Right lobe of liver (tissue), 6 donors: ENCODE measurements at regions of chr3 and their contacts with region 1.

Region 1: DNA sequence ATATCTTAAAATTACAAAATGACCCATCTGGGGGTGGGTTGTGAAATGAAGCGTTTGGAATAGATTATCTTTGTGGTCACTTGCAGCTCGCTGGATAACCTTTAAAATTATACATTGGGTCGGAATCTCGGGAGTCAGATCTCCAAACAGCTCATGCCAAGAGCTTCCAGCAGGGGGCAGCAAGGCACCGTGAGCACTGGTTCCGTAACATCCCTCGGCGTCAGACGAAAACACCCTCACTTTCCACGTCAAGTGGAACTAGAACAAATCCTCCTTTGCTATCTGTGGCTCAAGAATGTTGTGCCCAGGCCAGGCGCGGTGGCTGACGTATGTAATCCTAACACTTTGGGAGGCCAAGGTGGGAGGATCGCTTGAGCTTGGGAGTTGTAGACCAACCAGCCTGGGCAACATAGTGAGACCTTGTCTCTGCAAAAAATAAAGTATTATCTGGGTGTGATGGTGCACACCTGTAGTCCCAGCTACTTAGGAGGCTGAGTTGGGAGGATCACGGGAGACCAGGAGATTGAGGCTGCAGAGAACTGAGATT is 31.1 kb downstream of the UMPS start:
- DNase-seq: peak; percentile 80 to 86 (median 82)
- ATAC-seq: peak; percentile 92 to 94 (median 92)
- H3K4me3 ChIP-seq: peak overlapping the region in 1 of 3 donors; percentile 26
- H3K27ac ChIP-seq: peak overlapping the region in 1 of 3 donors; percentile 74
- H3K4me1 ChIP-seq: peaks cover 0 to 19% (median 7%) of the 10 kb centered on the region in 4 donors
- H3K27me3 ChIP-seq: no peaks in the 10 kb centered on the region
- CTCF ChIP-seq: peak; percentile 94 to 97 (median 96)
- POLR2A ChIP-seq: no peak

Region 2: DNA sequence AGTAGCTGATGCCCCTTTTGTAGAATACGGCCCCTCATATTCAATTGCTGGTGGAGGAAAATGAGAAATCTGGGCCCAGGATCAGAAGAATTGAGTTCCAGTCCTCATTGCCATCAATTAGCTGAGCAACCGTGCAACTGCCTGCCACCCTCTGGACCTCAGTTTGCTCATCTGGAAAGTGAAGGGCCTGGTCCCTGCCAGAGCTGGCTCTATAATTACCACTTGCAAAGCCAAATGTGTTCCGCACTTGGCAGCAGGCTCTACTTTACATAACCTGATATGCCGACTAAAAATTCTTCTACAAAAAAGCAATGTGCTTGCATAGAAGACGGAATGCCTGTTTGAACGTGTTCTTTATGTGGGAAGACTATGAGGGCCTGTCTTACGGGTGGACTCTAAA is 134.4 kb after region 1 on chr3:
- intact Hi-C with region 1: loop called (anchors 5 to 10 kb)
- DNase-seq: no peak
- ATAC-seq: no peak
- H3K4me3 ChIP-seq: no peak overlapping the region
- H3K27ac ChIP-seq: no peak overlapping the region
- H3K4me1 ChIP-seq: peaks cover 0 to 10% (median 0%) of the 10 kb centered on the region in 4 donors
- H3K27me3 ChIP-seq: no peaks in the 10 kb centered on the region
- CTCF ChIP-seq: no peak
- POLR2A ChIP-seq: no peak